ENCODE measurements at regions of chr1 and their contacts with region 1.

Region 1: DNA sequence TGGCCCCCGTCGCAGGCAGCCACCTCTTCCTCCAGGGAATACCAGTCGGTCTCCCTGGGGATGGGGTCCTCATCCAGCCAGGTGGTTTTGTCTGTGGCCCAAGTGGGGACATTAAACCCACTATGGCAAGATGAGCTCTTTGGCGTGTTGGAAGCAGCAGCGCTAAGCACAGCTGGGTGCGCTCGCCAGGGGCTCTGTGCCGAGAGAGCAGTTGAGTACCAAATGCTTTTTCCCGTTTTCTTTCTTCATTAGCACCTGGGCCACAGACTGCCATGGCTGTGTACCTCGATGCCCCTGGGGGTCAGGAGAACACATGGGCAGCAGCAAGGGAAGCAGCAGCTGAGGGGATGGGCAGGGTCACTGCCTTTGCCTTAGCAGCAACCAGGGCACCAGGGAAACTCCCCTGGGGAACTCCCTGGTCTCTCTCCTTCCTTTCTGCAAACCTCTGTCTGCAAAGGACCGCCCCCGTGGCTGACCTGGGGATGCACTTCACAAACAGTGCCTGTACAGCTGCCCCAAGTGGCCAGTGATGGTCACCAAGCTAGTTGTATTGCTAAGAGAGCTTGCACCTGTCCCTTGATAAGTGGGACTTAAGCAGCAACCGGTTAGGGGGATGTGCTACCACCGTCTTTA is 31.1 kb downstream of the EDARADD start:
- DNase-seq: no peak
- ATAC-seq: peak; percentile 69
- H3K4me3 ChIP-seq: no peak overlapping the region
- H3K27ac ChIP-seq: 0 out of 2 replicates have a peak overlapping the region, but pooled peaks have one; percentile 7
- H3K4me1 ChIP-seq: peaks cover 3% of the 10 kb centered on the region; the same call in 1 of the 2 replicates
- H3K27me3 ChIP-seq: no peaks in the 10 kb centered on the region
- CTCF ChIP-seq: no peak

Region 2: DNA sequence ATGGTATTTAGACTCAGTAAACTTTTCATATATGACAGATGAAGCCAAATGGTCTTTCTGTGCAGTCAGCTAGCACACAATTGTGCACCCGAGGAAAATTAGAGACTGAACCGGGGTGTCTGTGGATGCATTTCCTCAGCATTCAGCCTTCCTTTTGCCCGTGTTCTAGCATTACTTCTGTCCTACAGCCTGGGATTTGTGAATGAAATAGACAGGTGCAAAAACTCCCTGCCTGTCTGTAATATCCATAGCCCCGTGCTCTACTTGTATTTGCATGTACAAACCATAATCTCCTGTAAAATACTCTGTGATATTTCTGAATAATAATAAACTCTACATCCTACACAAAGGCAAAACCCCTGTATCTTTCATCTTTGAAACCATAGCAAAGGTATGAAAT is 33.8 kb after region 1 on chr1:
- CTCF ChIA-PET with region 1: no interaction called
- POLR2A ChIA-PET with region 1: interaction called, 10 read pairs
- in situ Hi-C with region 1: no loop called
- intact Hi-C with region 1: no loop called
- DNase-seq: no peak
- ATAC-seq: no peak
- H3K4me3 ChIP-seq: no peak overlapping the region
- H3K27ac ChIP-seq: no peak overlapping the region
- H3K4me1 ChIP-seq: no peaks in the 10 kb centered on the region
- H3K27me3 ChIP-seq: no peaks in the 10 kb centered on the region
- CTCF ChIP-seq: no peak

Measured in Panc1 (cell line).